Dorsolateral prefrontal cortex (tissue), 120 donors: ENCODE measurements at regions of chr9 and their contacts with region 1.

Region 1: GRCh38 chr9:104927912-104928740 is at the start of gene ABCA1:
- DNase-seq: peak; percentile 56 to 97 (median 90)
- H3K4me3 ChIP-seq: peak within 1 kb of the TSS; percentile 64 to 97 (median 82)
- H3K27ac ChIP-seq: peak within 1 kb of the TSS; percentile 15 to 91 (median 79)
- H3K27me3 ChIP-seq: no peaks in the 10 kb centered on the region
- CTCF ChIP-seq: peak in 3 of 56 donors; percentile 6 to 16 (median 13)
- total RNA-seq, gene ABCA1: 7.9 to 53.6 (median 16.8) TPM

Region 2: GRCh38 chr9:104863180-104863883 is 64.8 kb before region 1 on chr9:
- intact Hi-C with region 1: loop called (anchors 5 kb)
- DNase-seq: peak in 7 of 10 donors; percentile 28 to 68 (median 45)
- H3K4me3 ChIP-seq: peak overlapping the region in 2 of 59 donors; percentile 10 to 26
- H3K27ac ChIP-seq: peak overlapping the region in 12 of 59 donors; percentile 7 to 64 (median 35)
- H3K27me3 ChIP-seq: no peaks in the 10 kb centered on the region
- CTCF ChIP-seq: peak; percentile 66 to 91 (median 84)

Region 3: DNA sequence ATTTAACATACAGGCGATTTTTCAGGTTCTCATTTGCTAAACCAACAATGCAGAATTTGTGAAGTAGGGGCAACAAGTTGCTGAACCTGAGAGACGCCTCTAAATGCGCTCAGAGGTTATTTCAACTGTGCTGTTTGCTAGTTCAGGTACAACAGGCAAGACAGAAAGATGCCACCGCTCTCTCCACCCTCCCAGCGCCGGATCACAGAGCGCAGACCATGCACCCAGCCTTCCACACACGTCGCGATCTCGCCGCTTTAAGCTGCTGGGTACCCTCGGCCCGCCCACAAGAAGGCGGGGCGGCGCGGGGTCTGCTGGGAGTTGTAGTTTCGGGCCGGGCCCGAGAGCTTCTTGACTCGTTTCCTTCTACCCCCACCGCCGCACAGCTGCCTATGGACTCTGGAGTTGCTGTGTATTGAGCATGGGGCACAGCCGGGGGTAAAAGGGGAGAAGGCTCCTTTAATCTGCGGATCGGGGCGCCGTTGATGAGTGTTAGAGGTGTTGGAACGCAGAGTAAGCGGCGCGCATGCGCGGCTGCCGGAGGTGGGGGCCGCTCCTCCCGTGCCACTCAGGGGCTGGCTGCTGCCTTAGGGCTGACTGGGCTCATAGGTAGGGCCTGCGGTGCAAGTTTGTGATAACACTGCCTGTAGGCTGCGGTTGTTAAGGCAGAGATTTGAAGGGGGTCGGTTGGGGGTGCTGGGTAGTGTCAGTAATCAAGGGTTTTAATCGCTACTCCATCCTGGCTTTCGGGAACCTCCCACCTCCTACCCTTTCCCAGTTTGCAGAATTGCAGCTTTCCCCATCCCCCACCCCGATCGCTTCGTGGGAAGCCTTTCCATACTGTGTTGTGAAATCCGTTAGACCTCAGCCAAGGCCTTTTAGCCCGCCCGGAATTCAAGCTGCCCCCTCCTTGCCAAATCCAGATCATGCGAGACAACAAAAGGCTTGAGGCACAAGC is 40.2 kb after region 1 on chr9:
- intact Hi-C with region 1: loop called (anchors 1 to 2 kb)
- DNase-seq: peak; percentile 85 to 93 (median 90)
- H3K4me3 ChIP-seq: peak overlapping the region; percentile 52 to 99 (median 82)
- H3K27ac ChIP-seq: peak overlapping the region; percentile 89 to 100 (median 98)
- H3K27me3 ChIP-seq: no peaks in the 10 kb centered on the region
- CTCF ChIP-seq: peak in 12 of 56 donors; percentile 6 to 34 (median 23)

Region 4: DNA sequence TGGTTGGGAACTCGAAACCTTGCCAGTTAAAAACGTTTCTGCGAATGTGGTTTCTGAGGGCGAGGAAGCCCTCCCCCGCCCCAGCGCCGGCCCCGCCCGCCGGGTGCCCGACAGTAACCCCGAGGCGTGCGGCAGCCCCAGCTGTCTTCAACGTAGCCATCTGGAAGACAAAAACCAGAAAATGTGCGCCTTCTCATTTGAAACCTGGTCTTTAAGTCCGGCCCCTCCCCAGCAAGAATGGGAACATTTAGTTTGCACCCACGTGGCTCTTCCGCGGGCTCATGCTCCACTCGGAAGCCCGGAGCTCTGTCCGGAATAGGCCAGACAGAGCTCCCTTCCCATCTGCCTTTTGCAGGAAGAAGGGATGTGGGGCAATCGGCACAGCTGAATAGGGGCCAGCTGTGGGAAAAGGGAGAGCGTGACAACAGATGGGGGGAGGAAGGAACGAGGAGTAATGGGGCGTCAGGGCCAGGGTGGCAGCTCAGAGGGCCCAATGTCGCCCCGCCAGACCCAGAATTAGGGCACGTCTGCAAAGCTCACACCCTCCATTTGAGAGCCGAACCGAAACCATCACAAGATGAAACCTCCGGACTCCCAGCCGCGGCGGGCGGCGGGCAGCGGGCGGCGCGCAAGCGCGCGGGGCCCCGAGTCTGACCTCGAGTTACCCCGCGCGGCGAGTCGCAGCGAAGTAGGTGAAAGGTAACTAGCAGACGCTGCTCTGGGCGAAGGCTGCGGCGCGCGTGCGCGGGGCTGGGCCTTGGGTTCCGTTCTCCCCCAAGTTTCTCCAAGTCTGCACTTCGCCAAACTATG is 63.2 kb after region 1 on chr9:
- intact Hi-C with region 1: loop called in 1 of 2 experiments (anchors 1 kb)
- DNase-seq: peak; percentile 56 to 90 (median 84)
- H3K4me3 ChIP-seq: peak overlapping the region; percentile 51 to 88 (median 76)
- H3K27ac ChIP-seq: peak overlapping the region; percentile 52 to 97 (median 91)
- H3K27me3 ChIP-seq: no peaks in the 10 kb centered on the region
- CTCF ChIP-seq: peak in 18 of 56 donors; percentile 12 to 42 (median 23)

Region 5: GRCh38 chr9:105064315-105065097 is 136.4 kb after region 1 on chr9:
- intact Hi-C with region 1: loop called in 1 of 2 experiments (anchors 5 kb)
- DNase-seq: peak; percentile 33 to 86 (median 80)
- H3K4me3 ChIP-seq: peak overlapping the region in 42 of 59 donors; percentile 2 to 59 (median 26)
- H3K27ac ChIP-seq: peak overlapping the region in 33 of 59 donors; percentile 5 to 76 (median 41)
- H3K27me3 ChIP-seq: no peaks in the 10 kb centered on the region
- CTCF ChIP-seq: peak in 17 of 56 donors; percentile 7 to 43 (median 20)

Region 6: DNA sequence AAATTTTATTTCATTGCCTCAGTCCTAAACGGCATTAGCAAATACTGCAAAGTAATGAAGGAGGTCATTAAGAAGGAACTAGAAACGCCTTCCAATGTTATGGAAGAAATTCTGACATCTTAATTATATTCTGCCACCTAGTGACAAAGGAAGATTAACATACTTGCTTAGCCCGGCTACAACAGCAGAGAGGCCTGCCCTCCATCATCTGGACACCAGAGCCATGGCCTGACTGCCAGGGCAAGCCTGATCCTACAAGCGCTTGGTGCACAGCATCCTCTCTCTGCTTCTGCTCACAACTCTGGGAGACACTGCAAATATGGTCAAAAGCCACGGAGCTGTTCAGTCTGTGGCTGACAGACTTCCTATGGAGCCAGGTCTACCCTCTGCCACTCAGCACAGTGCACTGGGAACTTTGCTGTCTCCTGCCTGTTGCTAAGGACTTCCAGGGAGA is 229.0 kb after region 1 on chr9:
- intact Hi-C with region 1: loop called (anchors 2 to 5 kb)
- DNase-seq: peak in 8 of 10 donors; percentile 23 to 64 (median 56)
- H3K4me3 ChIP-seq: peak overlapping the region in 1 of 59 donors; percentile 2
- H3K27ac ChIP-seq: peak overlapping the region in 36 of 59 donors; percentile 2 to 78 (median 48)
- H3K27me3 ChIP-seq: no peaks in the 10 kb centered on the region
- CTCF ChIP-seq: peak; percentile 47 to 90 (median 72)

Region 7: DNA sequence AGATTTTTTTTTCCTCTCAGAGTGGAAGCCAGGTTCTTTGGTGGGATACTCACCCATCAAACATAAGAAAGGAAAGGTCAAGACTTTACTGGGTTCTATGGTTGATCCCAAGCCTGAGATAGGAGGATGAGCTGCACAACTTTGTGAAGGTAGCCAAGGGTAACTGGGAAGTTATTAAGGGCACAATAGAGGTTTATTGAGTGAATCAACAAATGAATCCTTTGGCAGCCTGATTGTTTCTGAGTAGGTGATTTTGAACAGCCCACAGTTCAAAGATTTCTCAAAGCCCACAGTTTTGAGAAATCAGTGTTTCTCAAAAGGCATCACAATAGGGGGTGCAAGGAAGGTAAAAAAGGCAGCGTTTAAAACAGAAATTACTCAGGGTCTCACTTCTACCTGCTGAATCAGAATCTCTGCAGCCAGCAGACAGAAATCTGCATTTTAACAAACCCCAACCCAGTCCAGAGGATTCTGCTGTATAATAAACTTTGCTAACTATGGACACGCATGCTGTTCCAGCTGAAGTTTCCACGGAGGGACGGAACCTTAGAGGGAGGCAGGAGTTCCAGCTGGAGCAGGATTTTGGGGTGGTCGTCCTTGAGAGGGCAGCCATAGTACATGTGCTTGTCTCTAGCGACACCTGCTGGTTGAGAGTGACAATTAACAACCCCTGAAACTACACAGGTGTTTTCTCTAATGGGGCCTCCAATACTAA is 487.0 kb after region 1 on chr9:
- intact Hi-C with region 1: loop called (anchors 5 kb)
- DNase-seq: peak in 6 of 10 donors; percentile 35 to 67 (median 58)
- H3K4me3 ChIP-seq: peak overlapping the region in 4 of 59 donors; percentile 11 to 33 (median 24)
- H3K27ac ChIP-seq: peak overlapping the region in 44 of 59 donors; percentile 1 to 84 (median 57)
- H3K27me3 ChIP-seq: no peaks in the 10 kb centered on the region
- CTCF ChIP-seq: peak; percentile 77 to 97 (median 88)